Activated T-helper 2 cell treated with anti-CD3 and anti-CD28 coated beads, Interferon-gamma antibody, Interleukin-2, Interleukin-4, amounts not matched to agents 10 μg/mL and 5 μg/mL and 100 μg/mL, durations not matched to agents 14 hours and 24 hours and 36 hours (primary cell): ENCODE measurements at regions of chr18 and their contacts with region 1.

Region 1: GRCh38 chr18:47930931-47931717 is 665 bp upstream of the SMAD2 start:
- DNase-seq: peak; percentile 96
- H3K4me3 Mint-ChIP-seq: peak overlapping the region; percentile 83
- H3K27ac Mint-ChIP-seq: peak overlapping the region; percentile 92
- H3K4me1 Mint-ChIP-seq: peaks cover 44% of the 10 kb centered on the region
- H3K27me3 Mint-ChIP-seq: peaks cover 2% of the 10 kb centered on the region

Region 2: GRCh38 chr18:47870605-47871004 is 60.5 kb before region 1 on chr18:
- intact Hi-C with region 1: loop called (anchors 2 kb)
- DNase-seq: no peak
- H3K4me3 Mint-ChIP-seq: no peak overlapping the region
- H3K27ac Mint-ChIP-seq: peak overlapping the region; percentile 68
- H3K4me1 Mint-ChIP-seq: peaks cover 51% of the 10 kb centered on the region
- H3K27me3 Mint-ChIP-seq: no peaks in the 10 kb centered on the region

Region 3: DNA sequence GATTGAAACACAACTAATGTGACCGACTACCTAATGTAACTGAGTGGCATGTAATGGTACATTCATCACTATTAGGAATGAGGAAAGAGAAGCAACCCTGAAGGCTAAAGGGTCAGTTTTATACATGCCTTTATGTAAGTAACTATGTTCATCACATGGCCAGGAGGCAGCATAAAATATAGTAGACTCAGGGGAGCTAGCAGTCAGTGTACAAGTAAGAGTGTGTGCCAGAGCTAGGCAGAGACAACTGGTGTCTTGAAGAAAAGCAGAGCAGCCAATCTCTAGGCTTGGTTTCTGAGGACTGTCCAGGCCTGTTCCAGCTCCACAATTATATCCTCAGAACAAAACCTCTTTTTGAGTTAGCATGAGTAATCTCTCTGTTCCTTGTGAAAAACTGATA is 18.8 kb before region 1 on chr18:
- intact Hi-C with region 1: loop called (anchors 1 kb)
- DNase-seq: no peak
- H3K4me3 Mint-ChIP-seq: peak overlapping the region; percentile 54
- H3K27ac Mint-ChIP-seq: peak overlapping the region; percentile 86
- H3K4me1 Mint-ChIP-seq: peaks cover 80% of the 10 kb centered on the region
- H3K27me3 Mint-ChIP-seq: no peaks in the 10 kb centered on the region

Region 4: GRCh38 chr18:47953471-47953931 is 22.4 kb after region 1 on chr18:
- intact Hi-C with region 1: no loop called
- DNase-seq: peak; percentile 20
- H3K4me3 Mint-ChIP-seq: no peak overlapping the region
- H3K27ac Mint-ChIP-seq: peak overlapping the region; percentile 87
- H3K4me1 Mint-ChIP-seq: peaks cover 9% of the 10 kb centered on the region
- H3K27me3 Mint-ChIP-seq: peaks cover 20% of the 10 kb centered on the region

Region 5: DNA sequence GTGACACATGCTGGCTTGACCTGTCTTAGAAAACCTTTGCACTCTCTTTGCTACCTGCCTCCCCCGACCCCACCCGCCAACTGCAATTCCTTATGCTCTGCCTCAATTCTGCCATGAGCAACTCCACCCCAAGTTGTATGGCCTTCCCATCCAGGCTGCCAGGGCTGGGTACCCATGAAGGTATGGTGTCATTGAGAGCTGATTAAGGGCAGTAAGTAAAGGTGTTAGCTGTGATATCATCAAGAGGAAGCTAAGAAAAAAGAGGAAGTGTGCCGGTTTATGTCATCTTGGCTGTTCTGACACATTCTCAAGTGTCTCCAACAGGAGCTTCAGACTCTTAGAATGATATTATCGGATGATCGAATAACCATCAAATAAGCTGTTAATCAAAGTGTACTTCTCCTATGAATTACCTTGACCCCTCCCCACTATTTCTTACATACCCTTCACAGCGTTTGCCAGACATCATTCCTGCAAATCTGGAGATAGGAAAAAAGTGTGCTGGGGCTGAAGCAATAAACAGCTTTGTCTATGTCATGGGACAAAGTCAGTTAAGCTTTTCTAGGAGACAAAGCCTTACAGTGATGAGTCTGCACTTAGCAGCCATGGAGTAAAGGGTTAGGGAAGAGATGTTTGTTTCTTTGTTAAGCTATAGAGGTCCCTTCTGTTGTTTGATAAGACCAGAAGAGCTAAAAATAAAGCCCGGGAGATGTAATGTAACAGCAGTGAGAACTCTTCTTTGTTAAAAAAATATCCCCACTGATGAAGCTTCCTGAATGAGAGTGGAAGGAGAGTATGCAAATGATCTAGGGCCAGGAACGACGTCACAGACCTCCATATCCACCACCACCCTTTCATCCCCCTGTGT is 39.8 kb after region 1 on chr18:
- intact Hi-C with region 1: no loop called
- DNase-seq: no peak
- H3K4me3 Mint-ChIP-seq: no peak overlapping the region
- H3K27ac Mint-ChIP-seq: no peak overlapping the region
- H3K4me1 Mint-ChIP-seq: peaks cover 5% of the 10 kb centered on the region
- H3K27me3 Mint-ChIP-seq: peaks cover 23% of the 10 kb centered on the region

Region 6: DNA sequence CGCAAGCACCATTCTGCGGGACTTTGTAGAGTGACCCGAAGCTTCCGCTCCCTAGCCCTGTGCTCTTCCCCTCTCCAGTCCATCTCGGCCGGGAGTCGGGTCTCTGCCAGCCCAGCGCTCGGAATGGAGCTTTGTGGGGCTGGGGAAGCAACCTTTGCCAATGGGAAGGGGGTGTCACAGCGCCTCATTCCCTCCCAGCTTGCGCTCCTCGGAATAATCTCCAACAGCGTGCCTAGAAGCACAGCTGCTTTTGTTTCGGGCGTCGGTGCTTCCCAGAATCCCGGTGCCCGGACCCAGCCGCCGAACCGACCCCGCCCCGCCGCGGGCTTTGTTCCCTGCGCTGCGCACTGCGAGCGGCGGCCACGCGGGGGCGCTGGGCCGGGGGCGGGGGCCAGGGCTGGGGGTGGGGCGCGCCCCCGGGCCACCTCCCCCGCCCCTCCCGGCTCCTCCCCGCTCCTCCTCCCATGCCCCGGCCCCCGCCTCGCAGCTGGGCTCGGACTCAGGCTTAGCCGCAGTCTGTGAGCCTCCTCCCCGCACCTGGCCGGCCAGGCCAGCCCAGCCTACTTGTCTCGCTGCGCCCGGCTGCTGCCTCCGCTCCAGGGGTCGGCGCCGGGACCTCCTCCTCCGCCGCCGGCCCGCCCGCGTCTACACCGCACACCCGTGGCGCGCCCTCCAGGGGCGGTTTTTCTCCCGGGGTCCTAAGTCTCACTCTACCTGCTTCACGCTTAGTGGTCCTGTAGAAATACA is 77.0 kb after region 1 on chr18:
- intact Hi-C with region 1: loop called (anchors 5 kb)
- DNase-seq: peak; percentile 16
- H3K4me3 Mint-ChIP-seq: peak overlapping the region; percentile 71
- H3K27ac Mint-ChIP-seq: no peak overlapping the region
- H3K4me1 Mint-ChIP-seq: peaks cover 6% of the 10 kb centered on the region
- H3K27me3 Mint-ChIP-seq: peaks cover 50% of the 10 kb centered on the region

Region 7: GRCh38 chr18:48073231-48073930 is 142.3 kb after region 1 on chr18:
- intact Hi-C with region 1: no loop called
- DNase-seq: no peak
- H3K4me3 Mint-ChIP-seq: no peak overlapping the region
- H3K27ac Mint-ChIP-seq: no peak overlapping the region
- H3K4me1 Mint-ChIP-seq: no peaks in the 10 kb centered on the region
- H3K27me3 Mint-ChIP-seq: peaks cover 8% of the 10 kb centered on the region

Region 8: GRCh38 chr18:48410095-48410920 is 479.2 kb after region 1 on chr18:
- intact Hi-C with region 1: loop called (anchors 5 kb)
- DNase-seq: peak; percentile 69
- H3K4me3 Mint-ChIP-seq: peak overlapping the region; percentile 51
- H3K27ac Mint-ChIP-seq: no peak overlapping the region
- H3K4me1 Mint-ChIP-seq: peaks cover 5% of the 10 kb centered on the region
- H3K27me3 Mint-ChIP-seq: peaks cover 74% of the 10 kb centered on the region